Left ventricle myocardium superior (tissue), 1 donor: ENCODE measurements at regions of chr12 and their contacts with region 1.

Region 1: DNA sequence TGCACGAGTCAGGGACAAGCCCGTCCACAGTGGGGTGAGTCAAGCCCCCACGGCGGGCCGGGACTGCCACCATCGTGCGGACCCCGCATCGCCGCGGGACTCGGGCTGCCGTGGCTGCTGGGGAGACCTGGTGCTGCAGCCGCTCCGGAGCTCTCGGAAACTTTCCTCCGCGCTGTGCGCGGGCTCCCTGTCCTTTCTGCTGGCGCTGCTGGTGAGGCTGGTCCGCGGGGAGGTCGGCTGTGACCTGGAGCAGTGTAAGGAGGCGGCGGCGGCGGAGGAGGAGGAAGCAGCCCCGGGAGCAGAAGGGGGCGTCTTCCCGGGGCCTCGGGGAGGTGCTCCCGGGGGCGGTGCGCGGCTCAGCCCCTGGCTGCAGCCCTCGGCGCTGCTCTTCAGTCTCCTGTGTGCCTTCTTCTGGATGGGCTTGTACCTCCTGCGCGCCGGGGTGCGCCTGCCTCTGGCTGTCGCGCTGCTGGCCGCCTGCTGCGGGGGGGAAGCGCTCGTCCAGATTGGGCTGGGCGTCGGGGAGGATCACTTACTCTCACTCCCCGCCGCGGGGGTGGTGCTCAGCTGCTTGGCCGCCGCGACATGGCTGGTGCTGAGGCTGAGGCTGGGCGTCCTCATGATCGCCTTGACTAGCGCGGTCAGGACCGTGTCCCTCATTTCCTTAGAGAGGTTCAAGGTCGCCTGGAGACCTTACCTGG is 1.1 kb downstream of the PDE3A start:
- DNase-seq: peak; percentile 92
- ATAC-seq: peak; percentile 82

Region 2: GRCh38 chr12:20272801-20273200 is 96.7 kb before region 1 on chr12:
- intact Hi-C with region 1: loop called (anchors 10 kb)
- DNase-seq: no peak
- ATAC-seq: peak; percentile 82